ENCODE measurements at regions of chr17 and their contacts with region 1.

Region 1: DNA sequence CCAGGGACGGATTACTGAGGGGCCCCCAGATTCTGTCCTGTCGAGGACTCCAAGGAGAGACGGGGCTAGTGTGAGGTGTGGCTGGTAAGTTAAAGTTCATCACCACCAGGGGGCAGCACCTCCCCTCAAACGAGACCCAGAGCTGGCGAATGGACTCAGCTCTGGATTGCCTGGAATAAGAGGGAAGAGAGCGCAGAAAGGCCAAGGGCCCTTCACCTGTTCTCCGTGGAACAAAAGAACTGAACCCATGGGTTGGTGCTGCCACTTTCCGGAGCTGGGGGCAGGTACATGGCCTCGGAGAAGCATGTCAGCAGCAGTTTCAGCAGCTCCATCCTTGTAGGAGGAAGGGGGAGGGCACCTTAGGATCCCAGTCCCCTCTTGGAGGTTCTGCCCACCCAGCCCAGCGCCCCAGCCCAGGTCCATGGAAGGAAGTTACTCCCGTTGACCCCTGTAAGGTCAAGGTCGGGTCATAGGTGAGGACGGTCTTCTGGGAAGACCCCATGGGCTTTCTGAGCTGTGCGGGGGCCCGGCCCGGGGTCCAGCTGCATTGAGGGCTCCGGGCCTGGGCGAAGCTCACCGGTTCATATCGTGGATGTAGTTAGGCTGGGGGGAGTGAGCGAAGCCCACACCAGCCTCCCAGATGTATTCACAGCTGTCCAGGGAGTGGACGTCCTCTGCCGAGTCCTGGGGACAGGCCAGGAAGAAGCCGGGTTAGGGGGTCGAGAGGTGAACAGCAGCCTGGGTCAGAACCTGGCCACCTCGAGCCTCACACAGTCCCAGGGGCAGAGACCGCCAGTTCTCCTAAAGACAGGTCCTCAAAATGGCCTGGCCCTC is 10.7 kb downstream of the HID1 start:
- DNase-seq: peak; percentile 87
- CTCF ChIP-seq: peak; percentile 74

Region 2: DNA sequence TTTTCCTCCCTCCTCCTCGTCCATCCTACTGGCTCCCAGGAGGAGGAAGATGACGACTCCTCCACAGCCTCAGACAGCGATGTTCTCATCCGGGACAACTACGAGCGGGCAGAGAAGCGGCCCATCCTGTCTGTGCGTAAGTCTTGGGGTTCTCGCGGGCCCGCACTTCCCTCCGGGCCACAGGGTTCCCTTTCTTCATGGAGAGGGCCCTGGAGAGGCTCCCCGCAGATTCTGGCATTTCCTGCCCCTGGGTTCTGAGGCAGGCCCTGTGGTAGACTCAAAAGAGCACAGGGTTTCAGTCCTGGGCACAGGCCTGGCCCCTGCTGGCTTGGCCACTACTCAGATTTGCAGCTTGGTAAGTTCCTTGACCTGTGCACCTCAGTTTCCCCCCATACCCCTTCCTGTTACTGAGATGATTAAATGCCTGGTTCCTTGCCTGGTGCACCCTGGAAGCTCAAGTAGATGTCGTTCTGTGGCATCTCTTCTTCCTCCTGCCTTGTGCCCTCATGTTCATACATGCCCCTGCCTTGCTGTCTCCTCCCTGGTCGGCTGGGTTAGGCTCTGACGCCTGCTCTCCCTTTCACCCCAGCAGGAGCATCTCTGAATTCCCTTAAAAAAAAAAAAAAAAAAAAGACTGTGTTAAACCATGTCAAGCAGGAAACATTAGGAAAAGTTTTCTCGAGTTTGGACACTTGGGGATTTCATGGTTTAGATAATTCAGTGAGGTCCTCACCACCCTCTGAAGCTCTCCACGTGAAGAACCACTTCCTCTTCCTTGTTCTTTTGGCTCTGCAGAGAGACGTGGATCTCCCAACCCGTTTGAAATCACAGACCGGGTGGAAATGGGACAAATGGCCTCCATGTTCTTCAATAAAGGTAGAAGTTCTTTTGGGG is 171.5 kb before region 1 on chr17:
- CTCF ChIA-PET with region 1: interaction called, 15 read pairs
- POLR2A ChIA-PET with region 1: interaction called, 3 read pairs
- DNase-seq: no peak
- CTCF ChIP-seq: no peak

Region 3: DNA sequence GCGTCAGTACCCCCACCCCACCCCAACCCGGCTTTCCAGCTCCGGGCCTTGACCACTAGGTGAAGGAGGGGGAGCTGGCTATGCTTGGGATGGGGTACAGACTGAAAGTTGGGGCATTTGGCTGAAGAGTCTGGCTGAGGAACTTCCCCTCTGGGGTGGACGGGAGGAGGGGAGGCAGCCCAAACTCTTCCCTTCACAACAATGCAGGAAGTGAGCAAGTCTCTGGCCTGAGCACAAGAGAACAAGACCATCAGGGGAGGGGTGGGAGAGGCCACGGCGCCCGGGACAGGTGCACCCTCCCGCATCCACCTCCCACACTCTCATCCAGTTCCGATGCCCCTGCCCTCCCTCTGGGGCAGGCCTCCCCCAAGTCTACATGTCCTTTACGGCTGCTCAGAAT is 44.4 kb before region 1 on chr17:
- CTCF ChIA-PET with region 1: interaction called, 390 read pairs
- POLR2A ChIA-PET with region 1: no interaction called
- DNase-seq: no peak
- CTCF ChIP-seq: no peak

Region 4: DNA sequence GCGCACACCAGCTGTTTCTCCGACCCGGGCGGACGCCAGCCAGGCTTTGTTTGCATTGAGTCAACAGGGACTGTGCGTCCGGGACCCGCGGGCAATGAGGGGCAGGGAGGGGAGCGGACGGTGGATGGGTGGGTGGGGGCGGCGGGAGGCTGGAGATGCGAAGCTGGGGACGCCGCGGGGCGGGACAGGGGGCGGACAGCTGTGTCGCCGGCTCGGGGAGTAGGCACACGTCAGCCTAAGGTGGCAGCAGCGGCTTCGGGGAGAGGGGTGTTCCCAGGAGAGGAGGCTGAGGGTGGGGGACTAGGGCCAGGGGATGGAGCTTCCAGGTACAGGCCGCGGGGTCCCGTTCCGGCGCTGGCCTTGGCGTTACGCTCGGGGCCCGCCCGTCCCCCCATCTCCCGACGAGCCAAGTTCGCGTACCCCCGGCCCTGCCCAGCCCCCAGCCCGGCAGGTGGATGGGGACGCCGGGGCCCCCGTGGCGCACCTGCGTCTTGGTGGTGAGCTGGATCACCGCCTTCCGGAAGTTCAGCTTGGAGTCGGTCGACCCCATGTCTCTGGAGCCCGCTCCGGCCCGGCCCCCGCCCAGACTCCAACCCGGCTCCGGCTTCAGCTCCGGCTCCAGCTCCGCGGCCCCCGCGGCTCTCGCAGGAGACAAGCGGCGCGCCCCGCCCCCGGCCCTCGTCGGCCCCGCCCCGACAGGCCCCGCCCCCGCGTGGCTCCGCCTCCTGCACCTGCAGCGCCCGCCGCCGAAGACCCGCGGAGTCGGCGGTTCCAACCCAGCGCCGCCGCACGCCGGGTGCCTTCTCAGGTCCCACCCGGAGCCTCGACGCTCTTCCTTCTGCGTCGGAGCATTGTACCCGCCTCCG is 10.5 kb after region 1 on chr17 and contains the start of gene HID1:
- CTCF ChIA-PET with region 1: interaction called, 148 read pairs
- POLR2A ChIA-PET with region 1: no interaction called
- DNase-seq: peak; percentile 86
- CTCF ChIP-seq: no peak

Region 5: DNA sequence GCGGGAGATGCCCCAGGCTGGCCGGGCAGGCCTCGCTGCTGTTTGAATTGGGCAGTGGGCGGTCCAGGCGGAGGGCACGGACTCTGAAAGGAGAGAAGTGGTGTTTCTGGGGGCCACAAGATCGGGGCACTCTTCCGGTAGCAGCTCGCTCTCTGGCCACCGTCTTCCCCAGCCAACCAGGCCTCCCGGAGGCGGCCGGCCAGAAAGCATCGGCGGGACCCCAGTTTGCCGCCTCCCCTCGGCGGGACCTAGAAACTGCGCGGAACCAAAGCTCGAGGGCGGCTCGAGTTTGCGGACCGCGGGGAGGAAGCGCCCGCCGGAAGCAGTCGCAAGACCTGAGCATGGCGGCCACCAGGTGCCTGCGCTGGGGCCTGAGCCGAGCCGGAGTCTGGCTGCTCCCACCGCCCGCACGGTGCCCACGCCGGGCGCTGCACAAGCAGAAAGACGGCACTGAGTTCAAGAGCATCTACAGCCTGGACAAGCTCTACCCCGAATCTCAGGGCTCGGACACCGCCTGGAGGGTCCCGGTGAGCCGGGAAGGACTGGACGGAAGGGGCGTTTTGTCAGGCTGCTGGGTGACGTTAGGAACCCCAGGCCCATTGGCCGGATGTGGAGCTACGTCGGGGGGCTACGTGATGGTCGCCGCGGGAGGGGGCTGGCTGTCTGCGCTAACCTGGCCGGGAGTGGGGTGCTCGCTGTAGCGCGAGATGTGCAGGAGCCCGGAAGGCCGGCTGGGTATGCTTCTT is 50.6 kb after region 1 on chr17 and contains the start of gene MRPL58:
- CTCF ChIA-PET with region 1: interaction called, 138 read pairs
- POLR2A ChIA-PET with region 1: no interaction called
- DNase-seq: peak; percentile 94
- CTCF ChIP-seq: peak; percentile 39

Region 6: DNA sequence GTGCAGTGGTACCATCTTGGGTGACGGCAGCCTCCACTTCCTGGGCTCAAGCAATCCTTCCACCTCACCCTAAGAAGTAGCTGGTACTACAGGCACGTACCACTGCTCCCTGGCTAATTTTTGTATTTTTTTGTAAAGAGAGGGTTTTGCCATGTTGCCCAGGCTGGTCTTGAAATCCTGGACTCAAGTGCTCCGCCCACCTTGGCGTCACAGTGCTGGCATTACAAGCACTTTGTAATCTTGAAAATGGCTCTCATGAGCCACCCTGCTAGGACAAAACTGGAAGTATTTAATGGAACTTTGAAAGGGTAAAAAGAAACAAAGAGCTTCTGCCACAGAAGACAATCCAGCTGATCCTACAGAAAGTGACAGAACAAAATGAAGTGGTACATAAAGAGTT is 211.7 kb after region 1 on chr17:
- CTCF ChIA-PET with region 1: interaction called, 28 read pairs
- POLR2A ChIA-PET with region 1: no interaction called
- DNase-seq: no peak
- CTCF ChIP-seq: no peak

Region 7: DNA sequence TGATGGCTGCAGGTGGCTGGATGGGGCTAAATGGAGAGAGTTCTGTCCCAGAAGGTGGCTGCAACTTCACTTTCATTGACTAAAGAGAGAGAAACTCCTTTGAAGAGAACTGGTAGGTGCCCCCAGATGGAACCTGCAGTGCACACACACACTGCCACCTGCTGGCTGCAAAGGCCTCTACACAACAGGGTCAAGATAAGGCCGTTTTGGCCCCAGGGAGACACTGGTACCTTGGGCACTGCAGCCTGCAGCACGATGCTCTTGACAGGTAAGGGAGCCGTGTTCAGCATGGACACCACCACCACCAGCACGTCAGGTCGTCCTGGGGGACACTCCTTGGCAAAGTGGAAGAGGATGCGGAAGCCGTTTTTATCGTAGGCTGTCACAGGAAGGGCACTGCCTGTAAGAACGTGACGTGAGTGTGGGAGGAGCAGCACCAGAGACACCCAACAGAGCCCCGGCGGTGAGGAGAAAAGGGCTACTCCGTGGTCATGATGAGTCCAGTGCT is 276.9 kb after region 1 on chr17:
- CTCF ChIA-PET with region 1: interaction called, 15 read pairs
- POLR2A ChIA-PET with region 1: no interaction called
- DNase-seq: peak; percentile 82
- CTCF ChIP-seq: peak; percentile 84